Activated CD4-positive, alpha-beta T cell treated with anti-CD3 and anti-CD28 coated beads for 36 hours (primary cell): ENCODE measurements at regions of chr5 and their contacts with region 1.

Region 1: GRCh38 chr5:51047369-51047768 is 335.9 kb upstream of the ISL1 start:
- DNase-seq: no peak
- ATAC-seq: no peak
- H3K4me3 Mint-ChIP-seq: no peak overlapping the region
- H3K27ac Mint-ChIP-seq: no peak overlapping the region
- H3K4me1 Mint-ChIP-seq: no peaks in the 10 kb centered on the region
- H3K27me3 Mint-ChIP-seq: no peaks in the 10 kb centered on the region

Region 2: GRCh38 chr5:50606179-50606578 is 441.2 kb before region 1 on chr5:
- CTCF ChIA-PET with region 1: no interaction called
- POLR2A ChIA-PET with region 1: no interaction called
- intact Hi-C with region 1: no loop called
- DNase-seq: no peak
- ATAC-seq: no peak
- H3K4me3 Mint-ChIP-seq: no peak overlapping the region
- H3K27ac Mint-ChIP-seq: no peak overlapping the region
- H3K4me1 Mint-ChIP-seq: peaks cover 10% of the 10 kb centered on the region
- H3K27me3 Mint-ChIP-seq: no peaks in the 10 kb centered on the region

Region 3: DNA sequence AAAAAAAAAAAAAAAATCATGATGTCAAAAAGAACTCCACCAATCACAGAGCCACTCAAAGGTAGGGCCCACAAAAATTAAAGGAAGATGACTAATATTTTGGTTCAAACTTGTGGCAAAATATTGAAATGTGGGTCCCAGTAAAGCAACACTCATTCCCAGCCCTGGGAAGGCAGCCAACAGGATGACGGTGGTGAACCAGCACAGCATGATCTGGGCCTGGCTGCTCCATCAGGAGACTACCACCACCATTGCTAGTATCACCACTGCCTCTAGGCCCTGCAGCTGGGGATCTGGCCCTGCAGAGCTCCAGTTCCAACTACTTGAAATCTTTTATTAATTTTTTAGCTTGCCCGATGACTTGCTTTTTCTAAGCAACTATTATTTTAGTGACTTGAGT is 1533.6 kb after region 1 on chr5:
- CTCF ChIA-PET with region 1: no interaction called
- POLR2A ChIA-PET with region 1: interaction called, 15 read pairs
- intact Hi-C with region 1: no loop called
- DNase-seq: no peak
- ATAC-seq: no peak
- H3K4me3 Mint-ChIP-seq: no peak overlapping the region
- H3K27ac Mint-ChIP-seq: no peak overlapping the region
- H3K4me1 Mint-ChIP-seq: no peaks in the 10 kb centered on the region
- H3K27me3 Mint-ChIP-seq: peaks cover 6% of the 10 kb centered on the region